ENCODE measurements at regions of chr1 and their contacts with region 1.

Region 1: GRCh38 chr1:165928075-165928731 is 100.8 kb downstream of the UCK2 start:
- DNase-seq: peak; percentile 26 to 71 (median 37)
- H3K4me3 ChIP-seq: no peak overlapping the region
- H3K27ac ChIP-seq: no peak overlapping the region
- H3K4me1 ChIP-seq: no peaks in the 10 kb centered on the region
- H3K27me3 ChIP-seq: no peaks in the 10 kb centered on the region
- CTCF ChIP-seq: peak; percentile 51 to 71 (median 60)
- POLR2A ChIP-seq: no peak

Region 2: DNA sequence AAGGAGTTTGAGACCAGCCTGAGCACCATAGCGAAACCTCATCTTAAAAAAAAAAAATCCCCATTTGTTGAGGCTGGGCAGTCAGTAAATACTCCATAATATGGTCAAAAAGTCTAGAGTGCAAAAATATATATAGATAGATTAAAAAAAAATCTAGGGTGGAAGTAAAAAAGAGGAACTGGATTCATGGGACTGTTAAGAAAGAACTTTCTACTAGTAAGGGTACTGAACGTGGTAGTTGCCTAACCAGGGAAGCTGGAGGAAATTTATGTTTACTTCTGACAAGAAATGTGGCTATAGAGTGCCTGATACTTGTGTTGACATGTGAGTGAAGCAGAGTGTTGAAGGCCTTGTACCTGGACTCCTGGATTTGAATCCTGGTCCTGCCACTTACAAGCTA is 504.5 kb after region 1 on chr1:
- intact Hi-C with region 1: loop called in 1 of 2 experiments (anchors 10 kb)
- DNase-seq: no peak
- H3K4me3 ChIP-seq: no peak overlapping the region
- H3K27ac ChIP-seq: no peak overlapping the region
- H3K4me1 ChIP-seq: no peaks in the 10 kb centered on the region
- H3K27me3 ChIP-seq: no peaks in the 10 kb centered on the region
- CTCF ChIP-seq: no peak
- POLR2A ChIP-seq: no peak

Region 3: GRCh38 chr1:166479052-166479631 is 550.9 kb after region 1 on chr1:
- intact Hi-C with region 1: loop called in 1 of 2 experiments (anchors 5 kb)
- DNase-seq: peak; percentile 38 to 78 (median 45)
- H3K4me3 ChIP-seq: no peak overlapping the region
- H3K27ac ChIP-seq: no peak overlapping the region
- H3K4me1 ChIP-seq: no peaks in the 10 kb centered on the region
- H3K27me3 ChIP-seq: no peaks in the 10 kb centered on the region
- CTCF ChIP-seq: peak; percentile 60 to 86 (median 67)
- POLR2A ChIP-seq: no peak

Measured in adrenal gland (tissue), 19 donors.